ENCODE measurements at regions of chrX and their contacts with region 1.

Region 1: DNA sequence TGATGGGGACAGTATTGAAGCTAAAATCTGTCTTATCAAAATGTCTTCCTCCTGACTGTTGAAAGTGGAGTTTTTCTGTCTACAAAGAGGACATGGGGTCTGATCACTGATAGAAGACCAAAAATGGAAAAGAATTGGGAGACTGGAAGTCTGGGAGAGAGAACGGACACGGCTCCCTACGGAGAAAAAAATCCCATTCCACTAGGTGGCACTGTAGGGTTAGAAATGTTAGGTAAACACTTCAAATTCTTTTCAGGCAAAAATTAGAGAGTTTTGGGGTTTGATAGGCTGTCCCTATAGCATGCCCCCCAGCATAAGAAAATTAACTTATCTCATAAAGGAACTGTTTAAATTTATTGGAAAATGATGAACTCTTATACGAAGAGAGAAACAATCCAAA is 200.5 kb downstream of the FAM133A start:
- DNase-seq: peak; percentile 64
- H3K4me3 Mint-ChIP-seq: no peak overlapping the region
- H3K27ac Mint-ChIP-seq: no peak overlapping the region
- H3K4me1 Mint-ChIP-seq: no peaks in the 10 kb centered on the region
- H3K27me3 Mint-ChIP-seq: peaks cover 5% of the 10 kb centered on the region
- CTCF ChIP-seq: peak; percentile 49

Region 2: GRCh38 chrX:94058728-94059382 is 184.3 kb after region 1 on chrX:
- CTCF ChIA-PET with region 1: interaction called, 5 read pairs
- POLR2A ChIA-PET with region 1: interaction called, 3 read pairs
- intact Hi-C with region 1: loop called (anchors 1 kb)
- DNase-seq: peak; percentile 58
- H3K4me3 Mint-ChIP-seq: no peak overlapping the region
- H3K27ac Mint-ChIP-seq: no peak overlapping the region
- H3K4me1 Mint-ChIP-seq: peaks cover 5% of the 10 kb centered on the region
- H3K27me3 Mint-ChIP-seq: peaks cover 53% of the 10 kb centered on the region
- CTCF ChIP-seq: peak; percentile 49

Region 3: DNA sequence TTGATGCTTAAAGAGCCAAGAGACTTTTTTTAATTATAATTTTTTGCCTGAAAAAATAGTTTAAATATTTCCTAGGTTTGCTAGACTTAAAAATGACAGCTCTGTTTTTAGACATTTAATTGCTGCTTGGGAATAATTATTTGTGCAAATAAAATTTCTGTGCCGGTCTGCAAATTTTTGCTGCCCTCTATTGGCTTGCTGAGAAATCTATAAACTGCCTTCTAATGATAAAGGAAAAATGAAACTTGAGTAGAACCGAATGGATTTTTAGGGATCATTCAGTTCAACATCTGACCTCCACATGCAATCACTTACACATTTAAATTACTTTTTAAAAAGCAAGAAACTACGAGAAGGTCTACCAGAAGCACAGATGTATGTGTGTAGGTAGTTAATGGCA is 233.4 kb after region 1 on chrX:
- CTCF ChIA-PET with region 1: no interaction called
- POLR2A ChIA-PET with region 1: no interaction called
- intact Hi-C with region 1: loop called (anchors 1 kb)
- DNase-seq: no peak
- H3K4me3 Mint-ChIP-seq: no peak overlapping the region
- H3K27ac Mint-ChIP-seq: no peak overlapping the region
- H3K4me1 Mint-ChIP-seq: peaks cover under 1% of the 10 kb centered on the region
- H3K27me3 Mint-ChIP-seq: peaks cover 11% of the 10 kb centered on the region
- CTCF ChIP-seq: peak; percentile 38

Region 4: DNA sequence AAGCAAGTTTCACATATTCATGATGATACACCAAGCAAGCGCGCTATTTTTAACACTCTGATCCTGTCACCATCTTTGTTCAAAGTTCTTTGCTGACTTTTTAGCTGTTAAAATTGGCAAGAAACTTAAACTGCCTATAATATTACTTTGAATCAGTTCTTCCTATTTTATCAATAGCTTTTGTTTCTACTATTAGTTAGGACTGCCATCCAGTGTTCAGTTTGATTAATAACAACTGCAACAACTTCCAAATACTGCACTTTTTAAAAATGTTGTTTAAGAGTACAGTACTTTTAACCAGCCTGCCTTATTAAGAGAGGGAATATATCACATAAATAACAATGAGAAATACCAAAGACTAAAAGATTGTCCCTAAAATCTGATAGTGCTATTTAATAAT is 413.8 kb after region 1 on chrX:
- CTCF ChIA-PET with region 1: interaction called, 10 read pairs
- POLR2A ChIA-PET with region 1: no interaction called
- intact Hi-C with region 1: loop called (anchors 1 kb)
- DNase-seq: peak; percentile 12
- H3K4me3 Mint-ChIP-seq: no peak overlapping the region
- H3K27ac Mint-ChIP-seq: no peak overlapping the region
- H3K4me1 Mint-ChIP-seq: no peaks in the 10 kb centered on the region
- H3K27me3 Mint-ChIP-seq: peaks cover 26% of the 10 kb centered on the region
- CTCF ChIP-seq: peak; percentile 42

Region 5: GRCh38 chrX:94633237-94633636 is 758.7 kb after region 1 on chrX:
- CTCF ChIA-PET with region 1: interaction called, 5 read pairs
- POLR2A ChIA-PET with region 1: no interaction called
- intact Hi-C with region 1: loop called (anchors 5 kb)
- DNase-seq: peak; percentile 1
- H3K4me3 Mint-ChIP-seq: no peak overlapping the region
- H3K27ac Mint-ChIP-seq: no peak overlapping the region
- H3K4me1 Mint-ChIP-seq: no peaks in the 10 kb centered on the region
- H3K27me3 Mint-ChIP-seq: no peaks in the 10 kb centered on the region
- CTCF ChIP-seq: peak; percentile 18

Measured in MCF 10A (cell line).